Endothelial cell of umbilical vein (primary cell): ENCODE measurements at regions of chr14 and their contacts with region 1.

Region 1: GRCh38 chr14:77314043-77314442 is 6.6 kb downstream of the POMT2 start:
- DNase-seq: no peak
- H3K4me3 ChIP-seq: no peak overlapping the region
- H3K27ac ChIP-seq: no peak overlapping the region
- H3K4me1 ChIP-seq: no peaks in the 10 kb centered on the region
- H3K27me3 ChIP-seq: no peaks in the 10 kb centered on the region
- CTCF ChIP-seq: no peak
- POLR2A ChIP-seq: no peak

Region 2: DNA sequence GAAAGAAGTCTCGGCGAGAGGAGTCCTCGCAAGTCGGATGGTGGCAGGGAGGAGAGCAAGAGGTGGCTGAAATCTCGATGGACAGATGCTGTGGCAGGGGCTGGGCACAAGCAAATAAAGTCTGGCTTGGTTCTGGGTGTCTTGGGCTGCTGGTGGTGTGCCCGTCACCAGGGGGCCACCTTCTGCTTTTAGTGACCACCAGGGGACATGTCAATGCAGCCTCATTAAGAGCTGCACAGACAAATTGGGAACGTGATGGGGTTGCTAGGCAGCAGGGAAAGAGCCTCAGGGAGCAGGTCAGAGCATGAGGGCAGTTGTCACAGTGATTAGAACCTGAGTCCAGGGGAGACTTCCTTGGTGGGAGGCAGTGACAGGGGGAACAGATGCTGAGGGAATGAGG is 443.9 kb before region 1 on chr14:
- CTCF ChIA-PET with region 1: interaction called, 62 read pairs
- POLR2A ChIA-PET with region 1: interaction called, 6 read pairs
- dilution Hi-C with region 1: no loop called
- intact Hi-C with region 1: loop called (anchors 1 kb)
- DNase-seq: no peak
- H3K4me3 ChIP-seq: no peak overlapping the region
- H3K27ac ChIP-seq: no peak overlapping the region
- H3K4me1 ChIP-seq: no peaks in the 10 kb centered on the region
- H3K27me3 ChIP-seq: no peaks in the 10 kb centered on the region
- CTCF ChIP-seq: peak; percentile 30 to 38
- POLR2A ChIP-seq: no peak

Region 3: DNA sequence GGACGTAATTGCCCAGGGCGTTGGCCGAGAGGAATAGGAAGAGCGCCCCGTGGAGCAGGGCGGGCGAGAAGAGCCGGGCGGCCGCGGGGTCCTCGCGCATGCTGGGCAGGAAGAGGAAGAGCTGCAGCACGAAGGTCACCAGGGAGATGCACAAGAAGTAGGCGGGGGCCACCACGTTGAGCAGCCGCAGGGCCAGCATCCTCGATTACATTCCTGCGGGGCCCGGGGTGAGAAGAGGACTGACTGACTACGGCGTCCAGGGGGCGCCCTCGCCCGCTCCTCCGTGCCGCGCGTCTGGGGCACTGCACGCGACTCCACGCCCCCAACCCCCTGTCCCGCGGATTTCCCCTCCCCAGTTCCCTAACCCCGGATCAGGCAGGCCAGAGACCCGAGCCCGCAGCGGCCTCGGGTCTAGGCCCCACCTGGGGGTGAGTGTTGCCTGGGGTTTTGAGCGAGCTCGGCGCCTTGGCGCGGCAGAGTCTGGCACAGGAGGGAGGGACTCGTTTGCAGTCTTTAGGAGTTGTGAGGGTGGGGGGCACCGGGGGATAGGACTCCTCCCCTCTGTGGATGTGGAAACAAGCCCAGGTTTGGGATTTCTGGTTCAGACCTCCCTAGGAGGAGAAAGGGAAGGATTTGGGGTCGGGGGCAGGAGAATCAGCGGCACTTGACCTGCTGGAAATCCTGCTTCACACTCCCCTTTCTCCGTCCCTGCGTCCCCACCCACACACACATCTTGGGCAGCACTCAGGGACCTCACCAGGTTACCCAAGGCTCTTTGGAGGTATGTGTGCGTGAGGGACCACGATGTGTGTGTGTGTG is 174.3 kb before region 1 on chr14:
- CTCF ChIA-PET with region 1: interaction called, 9 read pairs
- POLR2A ChIA-PET with region 1: no interaction called
- dilution Hi-C with region 1: no loop called
- intact Hi-C with region 1: loop called (anchors 1 kb)
- DNase-seq: no peak
- H3K4me3 ChIP-seq: peak overlapping the region in 1 of 3 experiments; percentile 9
- H3K27ac ChIP-seq: no peak overlapping the region
- H3K4me1 ChIP-seq: peaks cover 13% of the 10 kb centered on the region
- H3K27me3 ChIP-seq: peaks cover 47 to 49% of the 10 kb centered on the region in 2 experiments
- CTCF ChIP-seq: peak; percentile 67 to 89
- POLR2A ChIP-seq: no peak

Region 4: DNA sequence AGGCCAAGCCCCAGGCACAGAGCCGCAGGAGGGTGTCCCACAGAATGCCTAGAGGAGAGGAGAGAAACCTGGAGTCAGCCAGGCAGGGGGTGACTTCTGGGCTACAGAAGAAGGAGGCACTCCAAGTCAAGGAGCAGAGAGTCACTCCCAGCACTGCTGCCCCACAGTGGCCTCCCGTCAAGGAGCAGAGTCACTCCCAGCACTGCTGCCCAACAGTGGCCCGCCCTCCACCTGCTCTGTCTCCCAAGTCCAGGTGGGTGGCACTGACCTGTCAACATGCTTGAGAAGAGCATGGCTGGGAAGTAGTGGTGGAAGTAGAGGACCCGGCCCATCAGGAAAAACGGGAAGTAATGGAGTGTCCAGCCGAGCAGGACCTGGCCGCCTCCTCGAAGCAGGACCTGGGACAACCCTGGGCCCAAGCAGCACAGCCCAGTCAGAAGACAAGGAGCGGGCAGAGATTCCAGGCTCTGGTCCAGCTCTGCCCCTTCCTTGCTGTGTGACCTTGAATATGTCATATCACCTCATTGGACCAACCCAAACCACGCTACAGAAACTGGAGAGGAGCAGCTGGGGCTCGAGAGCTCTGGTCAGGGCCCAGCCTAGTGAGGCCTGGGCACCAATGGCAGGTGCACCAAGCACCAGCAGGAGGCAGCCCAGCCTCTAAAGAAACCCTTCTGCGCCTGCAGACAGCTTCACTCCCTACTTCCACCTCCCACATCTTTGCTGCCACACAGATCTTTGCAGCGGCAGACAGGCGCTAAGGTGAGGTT is 35.4 kb before region 1 on chr14:
- CTCF ChIA-PET with region 1: interaction called, 17 read pairs
- POLR2A ChIA-PET with region 1: no interaction called
- dilution Hi-C with region 1: no loop called
- intact Hi-C with region 1: no loop called
- DNase-seq: no peak
- H3K4me3 ChIP-seq: no peak overlapping the region
- H3K27ac ChIP-seq: no peak overlapping the region
- H3K4me1 ChIP-seq: no peaks in the 10 kb centered on the region
- H3K27me3 ChIP-seq: no peaks in the 10 kb centered on the region
- CTCF ChIP-seq: no peak
- POLR2A ChIP-seq: no peak

Region 5: DNA sequence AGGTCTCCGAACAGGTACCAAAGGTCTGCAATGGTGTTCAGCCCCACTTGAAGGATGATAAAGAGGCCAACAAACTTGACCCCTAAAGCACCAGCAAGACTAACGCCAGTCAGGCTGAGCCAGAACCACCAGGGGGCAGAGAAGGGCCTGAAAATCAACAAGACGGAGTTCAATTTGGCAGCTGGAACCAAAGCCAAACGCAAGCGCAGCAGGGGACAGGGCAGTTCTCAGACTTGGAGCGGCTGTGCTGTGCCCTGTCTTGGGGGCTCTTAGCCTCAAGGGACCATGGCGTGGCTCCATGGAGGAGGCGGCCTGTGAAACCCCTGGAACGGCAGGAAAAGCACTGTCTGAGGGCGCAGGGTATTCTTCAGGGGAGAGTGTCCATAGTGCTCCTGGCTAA is 12.9 kb before region 1 on chr14:
- CTCF ChIA-PET with region 1: interaction called, 515 read pairs
- POLR2A ChIA-PET with region 1: interaction called, 6 read pairs
- dilution Hi-C with region 1: no loop called
- intact Hi-C with region 1: loop called (anchors 1 kb)
- DNase-seq: peak; percentile 74
- H3K4me3 ChIP-seq: no peak overlapping the region
- H3K27ac ChIP-seq: no peak overlapping the region
- H3K4me1 ChIP-seq: peaks cover 29% of the 10 kb centered on the region
- H3K27me3 ChIP-seq: no peaks in the 10 kb centered on the region
- CTCF ChIP-seq: peak; percentile 85
- POLR2A ChIP-seq: no peak

Region 6: DNA sequence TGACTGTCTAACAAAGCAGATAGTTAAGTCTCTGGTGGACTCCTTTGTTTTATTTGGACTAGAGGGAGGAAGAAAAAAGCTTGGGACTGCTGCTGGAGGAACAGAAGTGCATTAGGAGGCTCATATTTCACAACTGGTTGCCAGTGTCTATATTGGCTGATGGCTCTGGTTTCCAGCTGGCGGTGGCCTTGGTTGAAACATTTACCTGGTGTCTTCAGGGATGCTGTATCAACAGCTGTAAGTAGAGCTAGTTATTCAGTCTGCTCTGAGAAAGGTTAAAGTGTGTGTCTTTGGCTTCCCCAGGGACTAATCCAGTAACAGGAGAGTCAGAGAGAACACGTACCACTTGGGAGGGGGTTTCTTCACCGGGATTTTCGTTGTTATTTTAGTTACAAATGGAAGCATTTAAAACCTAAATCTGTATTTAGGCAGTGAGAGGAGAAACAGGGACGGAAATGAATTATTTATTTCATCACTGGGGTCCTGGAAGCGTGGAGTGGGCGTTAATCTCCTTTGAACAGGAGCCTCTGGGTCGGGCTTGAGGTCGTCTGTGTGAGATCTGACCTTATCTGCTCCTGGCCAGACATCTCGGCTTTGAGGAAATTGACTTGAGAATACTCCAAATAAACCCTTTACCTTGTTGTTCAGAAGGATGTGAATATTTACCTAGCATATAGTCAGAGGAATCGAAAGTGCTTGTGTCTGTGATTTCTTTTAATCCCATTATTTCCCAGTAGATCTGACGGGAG is 1006.0 kb after region 1 on chr14:
- CTCF ChIA-PET with region 1: no interaction called
- POLR2A ChIA-PET with region 1: no interaction called
- dilution Hi-C with region 1: no loop called
- intact Hi-C with region 1: no loop called
- DNase-seq: no peak
- H3K4me3 ChIP-seq: no peak overlapping the region
- H3K27ac ChIP-seq: no peak overlapping the region
- H3K4me1 ChIP-seq: no peaks in the 10 kb centered on the region
- H3K27me3 ChIP-seq: no peaks in the 10 kb centered on the region
- CTCF ChIP-seq: no peak
- POLR2A ChIP-seq: no peak